AG04449 (cell line): ENCODE measurements at regions of chr11 and their contacts with region 1.

Region 1: GRCh38 chr11:35822815-35823495 is 120.9 kb upstream of the LDLRAD3 start:
- DNase-seq: no peak
- H3K4me3 ChIP-seq: no peak overlapping the region
- CTCF ChIP-seq: no peak

Region 2: GRCh38 chr11:35427071-35427470 is 395.9 kb before region 1 on chr11:
- CTCF ChIA-PET with region 1: no interaction called
- POLR2A ChIA-PET with region 1: no interaction called
- DNase-seq: peak; percentile 79
- H3K4me3 ChIP-seq: no peak overlapping the region
- CTCF ChIP-seq: no peak

Region 3: DNA sequence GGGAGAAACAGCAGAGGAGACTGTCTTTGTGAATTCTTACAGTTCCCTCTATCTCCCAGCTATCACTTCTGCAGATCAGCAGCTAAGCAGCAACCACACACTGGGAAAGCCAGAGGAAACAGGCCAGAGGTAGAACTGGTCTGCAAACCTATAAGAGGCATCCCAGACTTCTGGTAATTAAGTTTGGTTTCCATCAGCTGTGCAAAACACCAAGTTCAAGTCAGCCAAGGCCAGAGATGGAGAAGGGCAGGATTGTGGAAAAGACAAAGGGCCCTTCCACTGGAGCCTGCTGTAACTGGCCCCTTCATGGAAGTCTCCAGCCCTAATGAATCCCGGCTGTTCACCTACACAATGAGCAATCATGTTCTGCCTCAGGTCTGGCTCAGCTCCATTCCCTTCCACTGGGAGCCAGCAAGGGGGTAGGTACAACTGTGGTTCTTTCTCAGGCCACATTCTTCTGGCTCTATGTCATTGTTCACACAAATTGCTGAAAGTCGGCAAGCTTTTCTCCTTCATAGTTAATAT is 292.9 kb before region 1 on chr11:
- CTCF ChIA-PET with region 1: no interaction called
- POLR2A ChIA-PET with region 1: no interaction called
- DNase-seq: peak; percentile 87
- H3K4me3 ChIP-seq: no peak overlapping the region
- CTCF ChIP-seq: no peak

Region 4: DNA sequence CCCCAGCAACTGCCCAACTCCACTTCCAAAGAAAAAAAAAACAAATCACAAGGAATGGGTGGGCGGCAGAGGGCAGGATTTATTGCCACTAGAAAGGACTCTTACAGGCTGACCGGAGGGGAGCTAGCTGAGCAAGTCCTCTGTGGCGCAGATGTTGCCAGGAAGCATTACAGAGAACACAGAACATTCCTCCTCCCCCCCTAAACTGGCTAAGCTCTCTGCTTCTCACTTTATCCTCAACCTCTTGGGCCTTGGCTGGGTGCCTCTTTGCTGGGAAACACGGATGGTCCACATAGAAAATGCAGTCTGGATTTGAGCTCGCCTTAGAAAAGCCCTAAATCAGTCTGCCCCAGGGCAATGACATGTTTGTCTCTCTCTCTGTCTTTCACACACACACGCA is 217.2 kb before region 1 on chr11:
- CTCF ChIA-PET with region 1: interaction called, 10 read pairs
- POLR2A ChIA-PET with region 1: no interaction called
- DNase-seq: no peak
- H3K4me3 ChIP-seq: no peak overlapping the region
- CTCF ChIP-seq: no peak

Region 5: DNA sequence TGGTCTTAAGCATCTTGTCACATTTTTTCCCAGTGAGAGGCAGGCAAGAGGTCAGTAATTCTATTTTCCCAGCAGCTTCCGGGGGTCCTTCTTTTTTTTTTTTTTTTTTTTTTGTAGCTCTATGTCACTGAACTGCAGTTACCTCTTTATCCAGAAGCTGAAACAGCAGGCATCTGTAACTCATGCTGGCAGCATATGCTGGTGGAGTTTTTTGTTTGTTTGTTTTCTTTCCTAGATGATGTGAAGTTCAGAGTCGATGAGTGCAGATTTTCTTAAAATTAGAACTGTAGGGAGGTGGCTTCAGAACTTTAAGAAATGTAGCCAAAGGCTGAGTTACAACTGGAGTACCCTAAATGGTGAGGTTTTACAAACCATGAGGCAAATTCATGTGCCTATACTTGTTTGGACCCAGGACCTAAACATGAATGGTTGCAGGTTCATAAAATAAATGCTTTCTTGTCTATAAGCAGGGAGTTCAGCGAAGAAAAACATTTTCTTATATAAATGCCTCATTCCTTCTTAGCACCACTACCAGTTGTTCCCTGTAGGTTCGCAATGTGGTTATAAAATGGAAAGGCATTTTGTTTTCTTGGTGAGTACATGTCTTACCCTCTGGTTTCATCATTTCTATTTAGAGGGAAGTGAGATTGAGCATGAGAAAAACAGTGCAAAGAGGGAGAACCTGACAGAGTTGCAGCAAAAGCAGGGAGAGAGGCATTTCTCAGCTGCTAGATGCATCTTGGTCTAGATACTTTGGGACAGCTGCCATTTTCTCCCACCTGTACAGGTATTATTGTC is 76.4 kb before region 1 on chr11:
- CTCF ChIA-PET with region 1: interaction called, 11 read pairs
- POLR2A ChIA-PET with region 1: no interaction called
- DNase-seq: peak; percentile 24
- H3K4me3 ChIP-seq: no peak overlapping the region
- CTCF ChIP-seq: no peak

Region 6: GRCh38 chr11:35838071-35838470 is 15.1 kb after region 1 on chr11:
- CTCF ChIA-PET with region 1: interaction called, 99 read pairs
- POLR2A ChIA-PET with region 1: no interaction called
- DNase-seq: no peak
- H3K4me3 ChIP-seq: no peak overlapping the region
- CTCF ChIP-seq: no peak

Region 7: GRCh38 chr11:36037031-36037430 is 214.1 kb after region 1 on chr11:
- CTCF ChIA-PET with region 1: interaction called, 19 read pairs
- POLR2A ChIA-PET with region 1: no interaction called
- DNase-seq: no peak
- H3K4me3 ChIP-seq: no peak overlapping the region
- CTCF ChIP-seq: no peak

Region 8: DNA sequence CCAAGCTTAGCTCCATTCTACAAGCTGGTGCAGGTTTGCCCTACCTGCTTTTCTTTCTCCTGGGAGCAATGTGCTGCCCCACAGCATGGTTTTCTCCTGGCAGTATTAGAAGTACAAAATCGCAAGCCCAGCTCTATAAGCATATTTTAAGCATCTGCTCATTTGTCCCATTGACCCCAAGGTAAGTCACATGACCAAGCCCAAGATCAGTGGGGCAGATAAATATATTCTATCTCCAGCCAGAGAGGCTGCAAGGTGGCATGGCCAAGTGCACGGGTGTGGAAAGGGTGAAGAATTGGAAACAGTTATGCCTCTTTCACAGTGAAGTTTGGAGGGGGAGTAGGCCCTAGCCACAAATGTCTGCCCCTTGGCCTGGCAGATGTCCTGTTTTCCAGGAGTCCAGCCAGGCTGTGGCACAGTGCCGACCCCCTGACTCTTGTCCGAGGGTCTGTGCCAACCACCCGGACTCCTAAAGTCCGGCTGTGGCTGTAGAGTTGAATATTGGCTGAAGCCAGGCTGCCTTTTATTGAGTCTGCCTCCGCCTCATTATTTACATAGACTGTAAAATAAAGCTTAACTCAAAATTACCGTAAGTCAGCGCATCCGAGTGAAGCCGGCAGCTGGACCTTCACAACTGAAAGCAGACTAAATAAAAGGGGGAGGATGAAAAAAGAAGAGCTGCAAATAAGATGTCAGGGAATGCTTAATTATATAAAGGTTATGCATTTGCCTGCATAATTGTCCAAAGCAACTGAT is 300.6 kb after region 1 on chr11:
- CTCF ChIA-PET with region 1: interaction called, 15 read pairs
- POLR2A ChIA-PET with region 1: no interaction called
- DNase-seq: no peak
- H3K4me3 ChIP-seq: no peak overlapping the region
- CTCF ChIP-seq: no peak

Region 9: DNA sequence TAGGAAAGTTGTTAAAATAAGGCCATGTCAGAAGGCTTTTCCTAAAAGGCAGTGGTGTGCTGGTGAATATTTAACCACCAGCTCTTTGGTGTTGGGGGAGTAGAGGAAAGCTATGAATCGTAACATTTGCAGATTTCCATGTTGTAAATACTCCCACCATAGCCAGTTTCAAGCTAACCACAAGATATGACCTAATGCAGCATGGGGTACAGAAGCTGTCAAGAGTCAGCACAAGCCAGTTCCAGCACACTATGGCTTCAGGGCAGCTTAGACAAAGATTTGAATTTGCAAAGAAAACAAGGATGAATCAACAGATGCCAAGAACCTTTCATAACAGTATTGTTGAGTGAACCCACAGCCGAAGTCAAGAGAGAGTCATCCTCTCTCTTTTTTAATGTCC is 426.3 kb after region 1 on chr11:
- CTCF ChIA-PET with region 1: interaction called, 101 read pairs
- POLR2A ChIA-PET with region 1: no interaction called
- DNase-seq: peak; percentile 55
- H3K4me3 ChIP-seq: no peak overlapping the region
- CTCF ChIP-seq: no peak